ENCODE measurements at regions of chr1 and their contacts with region 1.

Region 1: DNA sequence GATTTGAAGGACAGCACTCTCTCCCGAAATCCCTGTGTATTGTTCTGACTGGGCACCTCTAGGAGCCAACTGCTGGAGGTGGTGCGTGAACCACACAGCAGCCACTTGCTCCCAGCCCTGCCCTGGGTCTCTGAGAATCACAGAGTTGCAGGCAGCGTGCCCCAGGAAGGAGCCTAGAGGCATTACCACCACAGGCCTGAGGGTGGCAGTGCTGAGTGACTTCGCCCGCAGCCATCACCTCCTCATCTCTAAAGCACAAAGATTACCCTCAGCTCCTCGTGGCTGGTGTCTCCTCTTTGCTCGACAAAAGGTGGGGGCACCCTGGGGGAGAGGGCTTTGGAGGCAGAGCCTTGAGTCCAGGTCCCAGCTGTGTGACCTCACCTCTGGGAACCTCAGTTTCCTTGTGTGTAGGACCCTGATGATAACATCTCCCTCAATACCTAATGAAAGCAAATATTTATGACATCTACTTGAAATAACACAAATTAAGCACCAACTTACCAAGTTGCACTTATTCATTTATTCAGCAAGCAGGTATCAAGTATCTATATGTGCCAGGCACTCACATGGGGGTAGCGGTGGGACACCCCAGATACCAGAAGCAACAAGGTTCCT is 86.3 kb downstream of the VWA5B1 start:
- DNase-seq: peak; percentile 75
- H3K4me3 ChIP-seq: no peak overlapping the region
- H3K27ac ChIP-seq: no peak overlapping the region
- H3K4me1 ChIP-seq: no peaks in the 10 kb centered on the region; a peak in 1 of 4 replicates
- H3K27me3 ChIP-seq: no peaks in the 10 kb centered on the region
- CTCF ChIP-seq: peak; percentile 76
- EP300 ChIP-seq: no peak
- RAD21 ChIP-seq: peak; percentile 70

Region 2: DNA sequence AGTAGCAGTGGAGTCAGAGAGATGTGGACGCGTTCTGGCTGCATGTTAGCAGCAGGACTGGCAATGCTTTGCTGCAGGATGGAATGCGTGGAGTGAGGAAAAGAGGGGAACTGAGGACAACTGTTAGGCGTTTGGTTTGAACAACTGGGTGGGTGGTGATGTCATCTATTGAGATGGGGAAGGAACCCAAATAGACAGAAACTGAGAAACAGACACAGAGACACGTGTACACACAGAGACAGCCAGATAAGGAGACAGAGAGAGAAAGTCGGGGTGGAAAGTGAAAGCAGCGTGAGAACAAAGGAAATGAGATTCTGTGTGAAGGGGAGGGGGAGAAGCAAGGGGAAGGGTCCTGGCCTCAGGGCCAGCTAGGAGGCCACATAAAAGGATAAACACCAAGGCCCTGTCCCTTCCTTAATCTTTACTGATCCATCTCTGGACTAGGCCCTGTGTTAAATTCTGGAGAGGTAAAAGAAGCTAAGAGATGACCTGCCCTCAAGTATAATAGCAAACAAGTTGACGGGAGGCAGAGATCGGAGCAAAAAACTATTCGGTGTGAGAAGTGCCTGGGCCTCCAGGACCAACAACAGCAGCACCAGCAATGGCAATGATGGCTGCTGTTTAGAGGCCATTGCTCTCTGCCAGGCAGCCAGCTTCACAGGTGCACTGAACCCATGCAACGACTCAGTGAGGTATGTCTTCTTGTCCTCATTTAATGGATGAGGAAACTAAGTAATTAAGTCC is 54.7 kb before region 1 on chr1:
- CTCF ChIA-PET with region 1: no interaction called
- POLR2A ChIA-PET with region 1: no interaction called
- DNase-seq: no peak
- H3K4me3 ChIP-seq: no peak overlapping the region
- H3K27ac ChIP-seq: no peak overlapping the region
- H3K4me1 ChIP-seq: peaks cover 0 to 41% of the 10 kb centered on the region in 2 experiments; a peak in 2 of 4 replicates
- H3K27me3 ChIP-seq: peaks cover 5% of the 10 kb centered on the region; the same call in 1 of the 2 replicates
- CTCF ChIP-seq: no peak
- EP300 ChIP-seq: no peak
- RAD21 ChIP-seq: no peak

Region 3: DNA sequence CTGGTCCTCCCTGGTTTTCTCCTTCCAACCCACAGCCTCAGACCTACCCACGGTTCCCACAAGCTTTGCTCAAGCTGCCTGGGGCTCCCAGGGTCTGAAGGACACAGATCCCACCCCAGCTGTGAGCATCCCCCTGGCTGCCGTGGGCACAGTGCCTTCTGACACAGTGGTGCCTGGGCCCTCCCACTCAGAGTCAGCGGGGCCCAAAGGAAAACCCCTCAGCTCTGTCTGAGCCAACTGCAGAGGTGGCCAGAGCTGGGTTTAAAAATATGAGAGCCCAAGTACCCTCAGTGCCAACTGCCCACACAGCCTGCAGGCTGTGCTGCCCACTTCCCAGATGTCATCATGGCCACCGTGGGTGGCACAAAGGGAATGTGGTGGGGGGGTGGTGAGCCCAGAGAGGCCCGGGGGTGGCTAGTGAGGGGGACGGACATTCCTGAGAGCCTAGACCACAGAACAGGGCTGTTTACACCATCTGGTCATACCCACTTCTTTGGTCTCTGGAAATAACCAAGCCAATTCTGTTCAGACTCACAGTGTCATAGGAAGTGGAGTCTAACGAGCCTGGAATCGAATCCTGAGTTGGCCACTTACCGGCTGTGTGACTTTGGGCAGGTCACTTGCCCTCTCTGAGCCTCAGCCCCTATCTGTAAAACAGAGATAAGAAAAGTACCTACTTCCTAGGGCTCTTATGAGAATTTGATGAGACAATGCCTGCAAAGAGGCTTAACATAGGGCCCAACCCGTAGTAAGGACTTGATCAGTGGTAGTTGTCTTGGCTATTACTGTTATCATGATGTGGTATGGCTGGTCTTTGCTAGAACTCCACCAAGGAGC is 23.6 kb after region 1 on chr1:
- CTCF ChIA-PET with region 1: interaction called, 17 read pairs
- POLR2A ChIA-PET with region 1: no interaction called
- DNase-seq: no peak
- H3K4me3 ChIP-seq: no peak overlapping the region
- H3K27ac ChIP-seq: no peak overlapping the region
- H3K4me1 ChIP-seq: no peaks in the 10 kb centered on the region; a peak in 1 of 4 replicates
- H3K27me3 ChIP-seq: no peaks in the 10 kb centered on the region
- CTCF ChIP-seq: no peak
- EP300 ChIP-seq: no peak
- RAD21 ChIP-seq: no peak

Region 4: DNA sequence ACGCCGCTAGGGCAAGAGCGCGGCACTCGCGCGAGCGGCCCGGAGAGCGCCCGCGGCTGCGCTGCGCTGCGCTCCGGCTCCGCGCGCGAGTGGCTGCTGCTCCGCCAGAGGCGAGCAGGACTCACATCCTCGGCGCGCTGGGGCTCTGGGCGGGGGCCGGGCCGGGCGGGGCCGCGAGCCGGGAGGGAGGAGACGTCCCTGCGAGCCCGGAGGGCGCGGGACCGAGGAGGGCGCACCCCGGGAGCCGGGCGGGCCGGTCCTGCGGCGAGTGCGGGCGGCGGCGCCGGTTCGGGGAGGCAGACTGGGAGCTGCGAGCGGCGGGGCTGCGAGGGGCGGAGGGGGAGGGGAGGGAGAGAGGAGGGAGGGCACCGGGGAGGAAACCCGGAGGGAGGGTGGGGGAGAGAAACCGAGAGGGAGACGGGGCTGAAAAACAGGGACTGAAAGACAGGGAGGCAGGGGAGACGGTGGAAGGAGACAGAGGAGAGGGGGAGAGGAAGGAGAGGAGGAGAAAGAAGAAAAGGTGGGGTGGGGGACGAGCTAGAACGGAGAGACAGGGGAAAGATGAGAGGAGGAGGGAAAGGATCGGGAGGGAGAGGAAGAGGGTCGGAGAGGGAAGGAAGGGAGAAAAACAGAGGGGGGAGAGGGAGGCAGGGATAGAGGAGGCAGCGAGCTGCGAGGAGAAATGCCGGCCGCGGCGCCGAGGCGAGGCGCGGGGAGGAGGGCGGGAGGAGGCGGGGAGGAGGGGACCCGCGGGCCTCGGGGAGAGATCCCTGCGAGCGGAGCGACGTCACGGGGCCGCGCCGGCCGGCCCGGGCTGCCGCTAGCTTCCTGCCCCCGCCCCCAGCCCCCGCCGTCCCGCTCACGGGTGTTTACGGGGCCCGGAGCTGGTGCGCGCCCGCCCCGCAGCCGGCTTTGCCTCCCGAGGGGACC is 108.8 kb after region 1 on chr1 and contains the start of gene CAMK2N1:
- CTCF ChIA-PET with region 1: interaction called, 21 read pairs
- POLR2A ChIA-PET with region 1: no interaction called
- DNase-seq: peak; percentile 89
- H3K4me3 ChIP-seq: peak within 1 kb of the TSS; percentile 68 to 74
- H3K27ac ChIP-seq: peak within 1 kb of the TSS; percentile 56 to 88
- H3K4me1 ChIP-seq: peaks cover 0 to 25% of the 10 kb centered on the region in 2 experiments; a peak in 2 of 4 replicates
- H3K27me3 ChIP-seq: 0 out of 2 replicates have a peak, but pooled peaks cover 3% of the 10 kb centered on the region
- CTCF ChIP-seq: no peak
- EP300 ChIP-seq: no peak
- RAD21 ChIP-seq: no peak
- polyA plus RNA-seq, gene CAMK2N1: 2.8 and 5.3 TPM in 2 replicates

Measured in SK-N-SH (cell line).